Naive thymus-derived CD4-positive, alpha-beta T cell (primary cell): ENCODE measurements at regions of chr18 and their contacts with region 1.

Region 1: GRCh38 chr18:3245853-3246634 is 1.6 kb upstream of the MYL12A start:
- DNase-seq: peak; percentile 56 to 79 (median 72)
- ATAC-seq: peak; percentile 78
- H3K4me3 ChIP-seq: peak overlapping the region; percentile 97
- H3K4me3 Mint-ChIP-seq: peak overlapping the region; percentile 87 to 99 (median 97)
- H3K27ac ChIP-seq: peak overlapping the region; percentile 80
- H3K27ac Mint-ChIP-seq: peak overlapping the region; percentile 77 to 99 (median 97)
- H3K4me1 ChIP-seq: peaks cover 12 to 18% of the 10 kb centered on the region in 2 donors
- H3K4me1 Mint-ChIP-seq: peaks cover 19 to 34% (median 32%) of the 10 kb centered on the region in 7 donors
- H3K27me3 ChIP-seq: no peaks in the 10 kb centered on the region
- H3K27me3 Mint-ChIP-seq: peaks cover 0 to 2% (median 0%) of the 10 kb centered on the region in 5 donors

Region 2: GRCh38 chr18:2337552-2338141 is 908.4 kb before region 1 on chr18:
- CTCF ChIA-PET with region 1: no interaction called
- POLR2A ChIA-PET with region 1: no interaction called
- intact Hi-C with region 1: loop called in 1 of 2 experiments (anchors 5 kb)
- DNase-seq: peak in 8 of 9 donors; percentile 1 to 35 (median 20)
- ATAC-seq: peak; percentile 71
- H3K4me3 ChIP-seq: no peak overlapping the region
- H3K4me3 Mint-ChIP-seq: no peak overlapping the region
- H3K27ac ChIP-seq: no peak overlapping the region
- H3K27ac Mint-ChIP-seq: no peak overlapping the region
- H3K4me1 ChIP-seq: no peaks in the 10 kb centered on the region
- H3K4me1 Mint-ChIP-seq: peaks cover 0 to 5% (median 0%) of the 10 kb centered on the region in 7 donors
- H3K27me3 ChIP-seq: peaks cover 0 to under 1% of the 10 kb centered on the region in 2 donors
- H3K27me3 Mint-ChIP-seq: peaks cover 14 to 36% (median 29%) of the 10 kb centered on the region in 5 donors

Region 3: DNA sequence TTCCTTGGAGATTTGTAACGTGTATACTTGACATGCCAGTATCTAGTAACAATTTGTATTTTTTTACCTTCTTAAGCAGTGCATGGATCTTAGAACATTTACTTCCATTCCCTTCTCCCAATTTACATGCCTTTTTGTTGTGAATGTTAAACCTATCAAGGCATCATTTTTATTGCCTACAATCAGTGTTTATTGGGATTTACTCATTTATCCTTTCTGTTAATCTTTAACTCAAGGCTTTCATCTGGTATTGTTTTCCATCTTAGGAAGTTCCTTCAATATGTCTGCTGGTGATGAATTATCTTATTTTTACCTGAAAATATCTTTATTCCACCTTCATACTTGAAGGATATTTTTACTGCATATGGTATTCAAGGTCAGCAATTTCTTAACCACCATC is 487.7 kb before region 1 on chr18:
- CTCF ChIA-PET with region 1: no interaction called
- POLR2A ChIA-PET with region 1: no interaction called
- intact Hi-C with region 1: loop called in 1 of 2 experiments (anchors 10 kb)
- DNase-seq: no peak
- ATAC-seq: no peak
- H3K4me3 ChIP-seq: no peak overlapping the region
- H3K4me3 Mint-ChIP-seq: peak overlapping the region in 1 of 10 donors; percentile 16
- H3K27ac ChIP-seq: no peak overlapping the region
- H3K27ac Mint-ChIP-seq: peak overlapping the region in 7 of 9 donors; percentile 34 to 84 (median 69)
- H3K4me1 ChIP-seq: peaks cover 8 to 10% of the 10 kb centered on the region in 2 donors
- H3K4me1 Mint-ChIP-seq: peaks cover 11 to 36% (median 34%) of the 10 kb centered on the region in 7 donors
- H3K27me3 ChIP-seq: no peaks in the 10 kb centered on the region
- H3K27me3 Mint-ChIP-seq: no peaks in the 10 kb centered on the region

Region 4: GRCh38 chr18:2994603-2995432 is 251.2 kb before region 1 on chr18:
- CTCF ChIA-PET with region 1: interaction called, 31 read pairs
- POLR2A ChIA-PET with region 1: interaction called, 27 read pairs
- intact Hi-C with region 1: loop called (anchors 1 kb)
- DNase-seq: peak; percentile 57 to 83 (median 77)
- ATAC-seq: peak; percentile 92
- H3K4me3 ChIP-seq: peak overlapping the region; percentile 35
- H3K4me3 Mint-ChIP-seq: peak overlapping the region; percentile 41 to 80 (median 68)
- H3K27ac ChIP-seq: peak overlapping the region; percentile 62
- H3K27ac Mint-ChIP-seq: peak overlapping the region; percentile 54 to 91 (median 84)
- H3K4me1 ChIP-seq: peaks cover 38 to 47% of the 10 kb centered on the region in 2 donors
- H3K4me1 Mint-ChIP-seq: peaks cover 48 to 87% (median 83%) of the 10 kb centered on the region in 7 donors
- H3K27me3 ChIP-seq: no peaks in the 10 kb centered on the region
- H3K27me3 Mint-ChIP-seq: no peaks in the 10 kb centered on the region

Region 5: GRCh38 chr18:3129053-3129864 is 116.8 kb before region 1 on chr18:
- CTCF ChIA-PET with region 1: interaction called, 14 read pairs
- POLR2A ChIA-PET with region 1: no interaction called
- intact Hi-C with region 1: loop called (anchors 1 kb)
- DNase-seq: peak; percentile 64 to 83 (median 77)
- ATAC-seq: peak; percentile 100
- H3K4me3 ChIP-seq: no peak overlapping the region
- H3K4me3 Mint-ChIP-seq: peak overlapping the region in 1 of 10 donors; percentile 33
- H3K27ac ChIP-seq: no peak overlapping the region
- H3K27ac Mint-ChIP-seq: peak overlapping the region in 4 of 9 donors; percentile 5 to 49 (median 16)
- H3K4me1 ChIP-seq: peaks cover 0 to 7% of the 10 kb centered on the region in 2 donors
- H3K4me1 Mint-ChIP-seq: peaks cover 7 to 10% (median 9%) of the 10 kb centered on the region in 7 donors
- H3K27me3 ChIP-seq: no peaks in the 10 kb centered on the region
- H3K27me3 Mint-ChIP-seq: peaks cover 0 to 3% (median 0%) of the 10 kb centered on the region in 5 donors

Region 6: GRCh38 chr18:3261371-3262246 is 15.6 kb after region 1 on chr18 and contains the start of gene MYL12B:
- CTCF ChIA-PET with region 1: interaction called, 6 read pairs
- POLR2A ChIA-PET with region 1: interaction called, 229 read pairs
- intact Hi-C with region 1: loop called (anchors 1 kb)
- DNase-seq: peak; percentile 72 to 88 (median 84)
- ATAC-seq: peak; percentile 87
- H3K4me3 ChIP-seq: peak within 1 kb of the TSS; percentile 81
- H3K4me3 Mint-ChIP-seq: peak within 1 kb of the TSS; percentile 87 to 100 (median 96)
- H3K27ac ChIP-seq: peak within 1 kb of the TSS; percentile 96
- H3K27ac Mint-ChIP-seq: peak within 1 kb of the TSS; percentile 95 to 100 (median 99)
- H3K4me1 ChIP-seq: peaks cover 54 to 66% of the 10 kb centered on the region in 2 donors
- H3K4me1 Mint-ChIP-seq: peaks cover 48 to 87% (median 83%) of the 10 kb centered on the region in 7 donors
- H3K27me3 ChIP-seq: no peaks in the 10 kb centered on the region
- H3K27me3 Mint-ChIP-seq: no peaks in the 10 kb centered on the region
- total RNA-seq, gene MYL12B: 140 to 300 (median 169) TPM

Region 7: DNA sequence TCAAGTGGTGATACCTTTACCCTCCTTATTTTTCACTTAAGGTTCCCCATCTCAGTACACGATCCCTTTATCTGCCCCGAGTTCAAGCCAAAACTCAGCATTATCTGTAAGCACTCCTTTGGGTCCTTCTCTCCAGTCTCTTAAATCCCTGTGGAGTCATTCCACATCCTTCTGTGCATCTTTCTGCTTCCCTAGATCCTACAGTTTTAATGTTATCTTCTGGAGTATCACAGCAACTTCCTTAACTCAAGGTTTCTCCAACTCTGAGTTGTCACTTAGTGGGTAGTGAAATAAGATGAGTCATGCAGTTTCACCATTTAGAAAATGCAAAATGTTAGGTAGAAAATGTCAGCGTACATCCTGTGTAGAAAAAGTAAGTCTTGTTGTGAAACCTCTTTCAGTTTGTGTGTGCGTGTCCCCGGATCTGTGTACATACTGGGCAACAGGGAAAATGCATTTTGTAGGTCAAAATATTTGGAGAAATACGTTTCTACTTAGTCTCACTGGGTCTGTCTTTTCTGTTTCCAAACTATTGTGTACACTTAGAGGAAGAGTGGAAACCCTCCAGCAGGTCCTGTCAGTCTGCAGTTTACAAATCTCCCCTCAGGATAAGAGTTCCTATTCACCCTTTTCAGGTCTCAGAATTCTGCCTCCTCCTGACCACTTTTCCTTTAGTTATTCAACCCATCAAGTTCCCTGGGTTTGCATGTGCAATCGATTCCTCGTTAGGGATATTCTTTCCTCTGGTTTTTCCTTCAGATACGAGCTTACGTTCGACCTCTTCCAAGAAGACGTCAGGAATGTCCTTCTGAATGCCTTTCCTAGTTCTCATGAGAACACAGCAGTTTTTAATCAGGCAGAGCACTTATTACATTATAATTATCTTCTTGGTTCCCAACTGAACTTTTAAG is 358.7 kb after region 1 on chr18:
- CTCF ChIA-PET with region 1: no interaction called
- POLR2A ChIA-PET with region 1: interaction called, 15 read pairs
- intact Hi-C with region 1: no loop called
- DNase-seq: peak in 6 of 9 donors; percentile 20 to 55 (median 48)
- ATAC-seq: peak; percentile 71
- H3K4me3 ChIP-seq: peak overlapping the region; percentile 43
- H3K4me3 Mint-ChIP-seq: no peak overlapping the region
- H3K27ac ChIP-seq: peak overlapping the region; percentile 52
- H3K27ac Mint-ChIP-seq: no peak overlapping the region
- H3K4me1 ChIP-seq: peaks cover 32 to 38% of the 10 kb centered on the region in 2 donors
- H3K4me1 Mint-ChIP-seq: peaks cover 0 to 27% (median 7%) of the 10 kb centered on the region in 7 donors
- H3K27me3 ChIP-seq: no peaks in the 10 kb centered on the region
- H3K27me3 Mint-ChIP-seq: no peaks in the 10 kb centered on the region